ENCODE measurements at regions of chr22 and their contacts with region 1.

Region 1: GRCh38 chr22:31036671-31037550 is 44.2 kb upstream of the SMTN start:
- DNase-seq: peak; percentile 53
- ATAC-seq: peak; percentile 59
- H3K4me3 ChIP-seq: peak overlapping the region; percentile 13; the same call in 1 of the 2 replicates
- H3K27ac ChIP-seq: peak overlapping the region; percentile 86; the same call in 1 of the 2 replicates
- H3K4me1 ChIP-seq: peaks cover 15% of the 10 kb centered on the region
- H3K27me3 ChIP-seq: no peaks in the 10 kb centered on the region
- CTCF ChIP-seq: peak; percentile 24
- POLR2A ChIP-seq: no peak
- RAD21 ChIP-seq: peak; percentile 25; the same call in 1 of the 2 replicates

Region 2: DNA sequence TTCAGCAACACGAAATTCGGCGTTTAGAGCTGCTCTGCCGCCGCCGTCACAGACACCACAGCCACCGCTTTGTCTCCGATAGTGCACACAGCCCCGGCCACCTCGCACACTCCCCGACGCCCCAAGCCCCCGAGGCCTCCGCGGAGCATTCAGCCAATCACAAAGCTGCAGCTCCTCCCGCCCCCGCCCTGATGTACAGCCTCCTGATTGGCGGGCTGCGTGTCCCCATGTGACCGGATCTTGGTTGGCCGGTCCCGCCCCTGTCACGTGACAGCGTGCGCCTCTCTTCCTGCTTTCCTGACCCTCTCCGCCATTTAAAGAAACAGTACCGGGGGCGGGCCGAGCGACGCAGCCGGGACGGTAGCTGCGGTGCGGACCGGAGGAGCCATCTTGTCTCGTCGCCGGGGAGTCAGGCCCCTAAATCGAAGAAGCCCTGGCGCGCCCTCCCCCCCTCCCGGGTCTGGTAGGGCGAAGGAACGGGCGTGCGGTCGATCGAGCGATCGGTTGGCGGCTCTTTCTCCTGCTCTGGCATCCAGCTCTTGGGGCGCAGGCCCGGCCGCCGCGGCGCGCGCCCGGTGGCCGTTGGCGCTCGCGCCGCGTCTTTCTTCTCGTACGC is 67.9 kb before region 1 on chr22 and contains the start of gene TUG1:
- CTCF ChIA-PET with region 1: no interaction called
- POLR2A ChIA-PET with region 1: interaction called, 3 read pairs
- dilution Hi-C with region 1: no loop called
- in situ Hi-C with region 1: no loop called
- intact Hi-C with region 1: loop called (anchors 5 kb)
- DNase-seq: peak; percentile 98
- ATAC-seq: peak; percentile 95
- H3K4me3 ChIP-seq: peak within 1 kb of the TSS; percentile 68
- H3K27ac ChIP-seq: peak within 1 kb of the TSS; percentile 97
- H3K4me1 ChIP-seq: peaks cover 10% of the 10 kb centered on the region
- H3K27me3 ChIP-seq: no peaks in the 10 kb centered on the region
- CTCF ChIP-seq: no peak
- POLR2A ChIP-seq: peak; percentile 88
- RAD21 ChIP-seq: no peak
- total RNA-seq, gene TUG1: 63.3 and 68.8 TPM in 2 replicates

Region 3: GRCh38 chr22:30979932-30980331 is 57.0 kb before region 1 on chr22:
- CTCF ChIA-PET with region 1: no interaction called
- POLR2A ChIA-PET with region 1: interaction called, 3 read pairs
- dilution Hi-C with region 1: no loop called
- in situ Hi-C with region 1: loop called (anchors 5 kb)
- intact Hi-C with region 1: no loop called
- DNase-seq: no peak
- ATAC-seq: no peak
- H3K4me3 ChIP-seq: no peak overlapping the region
- H3K27ac ChIP-seq: no peak overlapping the region
- H3K4me1 ChIP-seq: no peaks in the 10 kb centered on the region
- H3K27me3 ChIP-seq: no peaks in the 10 kb centered on the region
- CTCF ChIP-seq: no peak
- POLR2A ChIP-seq: no peak
- RAD21 ChIP-seq: no peak

Region 4: GRCh38 chr22:31055635-31056159 is 18.8 kb after region 1 on chr22:
- CTCF ChIA-PET with region 1: no interaction called
- POLR2A ChIA-PET with region 1: no interaction called
- dilution Hi-C with region 1: no loop called
- in situ Hi-C with region 1: no loop called
- intact Hi-C with region 1: no loop called
- DNase-seq: peak; percentile 99
- ATAC-seq: peak; percentile 96
- H3K4me3 ChIP-seq: no peak overlapping the region
- H3K27ac ChIP-seq: peak overlapping the region; percentile 59; the same call in 1 of the 2 replicates
- H3K4me1 ChIP-seq: peaks cover 15% of the 10 kb centered on the region
- H3K27me3 ChIP-seq: no peaks in the 10 kb centered on the region
- CTCF ChIP-seq: no peak
- POLR2A ChIP-seq: no peak
- RAD21 ChIP-seq: peak; percentile 23; the same call in 1 of the 2 replicates

Region 5: GRCh38 chr22:32754413-32755041 is 1717.6 kb after region 1 on chr22:
- CTCF ChIA-PET with region 1: no interaction called
- POLR2A ChIA-PET with region 1: no interaction called
- dilution Hi-C with region 1: no loop called
- in situ Hi-C with region 1: no loop called
- intact Hi-C with region 1: no loop called
- DNase-seq: peak; percentile 65
- ATAC-seq: peak; percentile 62
- H3K4me3 ChIP-seq: no peak overlapping the region
- H3K27ac ChIP-seq: no peak overlapping the region; the same call in 1 of the 2 replicates
- H3K4me1 ChIP-seq: peaks cover 23% of the 10 kb centered on the region
- H3K27me3 ChIP-seq: no peaks in the 10 kb centered on the region
- CTCF ChIP-seq: no peak
- POLR2A ChIP-seq: no peak
- RAD21 ChIP-seq: no peak